Lower lobe of right lung (tissue), 2 donors: ENCODE measurements at regions of chr2 and their contacts with region 1.

Region 1: GRCh38 chr2:88159955-88160415 is 10.2 kb upstream of the THNSL2 start:
- DNase-seq: no peak
- ATAC-seq: peak; percentile 74 to 82
- H3K4me3 ChIP-seq: no peak overlapping the region
- H3K27ac ChIP-seq: no peak overlapping the region
- H3K4me1 ChIP-seq: no peaks in the 10 kb centered on the region
- H3K27me3 ChIP-seq: no peaks in the 10 kb centered on the region
- CTCF ChIP-seq: peak; percentile 85

Region 2: DNA sequence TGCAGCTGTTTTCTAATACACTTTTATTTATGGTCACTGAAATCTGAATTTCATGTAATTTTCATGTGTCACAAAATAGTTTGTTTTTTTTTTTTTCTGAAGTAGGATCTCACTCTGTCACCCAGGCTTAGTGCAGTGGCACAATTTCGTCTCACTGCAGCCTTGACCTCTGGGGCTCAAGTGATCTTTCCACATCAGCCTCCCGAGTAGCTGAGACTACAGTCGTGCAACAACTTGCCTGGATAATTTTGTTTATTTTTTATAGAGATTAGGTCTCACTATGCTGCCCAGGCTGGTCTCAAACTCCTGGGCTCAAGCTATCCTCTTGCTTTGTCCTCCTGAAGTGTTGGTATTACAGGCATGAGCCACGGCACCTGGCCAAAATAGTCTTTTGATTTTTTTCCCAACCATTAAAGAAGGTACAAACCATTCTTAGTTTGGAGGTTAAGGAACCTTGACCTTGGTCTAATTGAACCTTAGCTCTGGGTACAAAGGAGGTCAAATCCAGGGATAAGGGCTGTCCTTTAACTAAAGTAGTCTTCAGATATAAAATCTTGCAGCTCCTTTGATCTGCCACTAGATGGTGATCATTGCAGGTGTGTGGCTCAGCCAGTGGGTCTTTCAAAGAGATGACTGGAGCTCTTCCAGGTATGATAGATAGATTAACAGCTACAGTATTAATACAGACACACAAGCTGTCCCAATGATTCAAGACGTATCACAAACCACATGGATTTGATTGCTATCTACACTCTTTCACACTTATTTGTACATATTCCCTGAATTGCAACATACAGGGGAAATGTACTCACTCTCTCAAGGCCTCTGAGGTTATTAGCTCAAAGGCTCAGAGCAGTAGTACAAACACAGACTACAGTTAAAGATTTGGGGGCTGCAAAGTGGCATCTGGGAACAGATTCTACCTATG is 99.7 kb before region 1 on chr2:
- intact Hi-C with region 1: loop called (anchors 5 kb)
- DNase-seq: no peak
- ATAC-seq: peak; percentile 43 to 48
- H3K4me3 ChIP-seq: no peak overlapping the region
- H3K27ac ChIP-seq: no peak overlapping the region
- H3K4me1 ChIP-seq: peaks cover 5% of the 10 kb centered on the region
- H3K27me3 ChIP-seq: no peaks in the 10 kb centered on the region
- CTCF ChIP-seq: peak; percentile 74

Region 3: DNA sequence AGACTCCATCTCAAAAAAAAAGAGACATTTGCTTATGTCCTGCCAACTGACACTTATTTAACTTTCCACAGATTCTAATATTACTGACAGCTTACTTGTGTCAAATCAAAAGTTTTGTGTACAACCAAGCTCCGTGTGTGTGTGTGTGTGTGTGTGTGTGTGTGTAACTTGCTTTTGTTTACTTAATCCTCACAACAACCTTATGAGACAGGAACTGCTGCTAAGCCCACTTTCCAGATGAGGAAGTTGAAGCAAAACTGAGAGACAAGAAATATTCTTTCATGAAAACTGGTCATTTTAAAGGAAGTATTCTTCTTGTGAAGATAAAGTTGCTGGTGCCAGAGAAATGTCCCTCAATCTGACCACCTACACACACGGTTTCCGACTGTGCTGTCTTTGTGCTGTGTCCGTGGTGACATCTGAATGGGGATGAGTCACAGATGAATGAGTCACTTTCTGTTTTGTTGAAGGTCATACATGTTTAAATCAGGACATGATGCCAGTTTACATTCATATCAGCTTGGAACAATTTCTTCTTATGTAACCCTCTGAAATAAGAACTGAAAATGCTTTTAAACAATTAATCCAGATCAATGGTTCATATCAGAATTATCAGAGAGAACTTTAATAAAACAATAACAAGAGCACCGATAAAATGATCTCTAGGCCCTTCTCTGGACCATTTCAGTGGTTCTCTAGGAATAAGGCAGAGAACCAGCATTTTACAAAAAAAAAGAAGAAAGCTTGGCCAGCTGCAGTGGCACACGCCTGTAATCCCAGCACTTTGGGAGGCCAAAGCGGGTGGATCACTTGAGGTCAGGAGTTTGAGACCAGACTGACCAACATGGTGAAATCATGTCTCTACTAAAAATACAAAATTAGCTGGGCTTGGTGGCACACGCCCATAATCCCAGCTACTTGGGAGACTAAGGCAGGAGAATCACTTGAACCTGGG is 105.6 kb after region 1 on chr2:
- intact Hi-C with region 1: no loop called
- DNase-seq: no peak
- ATAC-seq: peak; percentile 64 to 75
- H3K4me3 ChIP-seq: no peak overlapping the region
- H3K27ac ChIP-seq: peak overlapping the region; percentile 6
- H3K4me1 ChIP-seq: no peaks in the 10 kb centered on the region
- H3K27me3 ChIP-seq: no peaks in the 10 kb centered on the region
- CTCF ChIP-seq: no peak